ENCODE measurements at regions of chr6 and their contacts with region 1.

Region 1: DNA sequence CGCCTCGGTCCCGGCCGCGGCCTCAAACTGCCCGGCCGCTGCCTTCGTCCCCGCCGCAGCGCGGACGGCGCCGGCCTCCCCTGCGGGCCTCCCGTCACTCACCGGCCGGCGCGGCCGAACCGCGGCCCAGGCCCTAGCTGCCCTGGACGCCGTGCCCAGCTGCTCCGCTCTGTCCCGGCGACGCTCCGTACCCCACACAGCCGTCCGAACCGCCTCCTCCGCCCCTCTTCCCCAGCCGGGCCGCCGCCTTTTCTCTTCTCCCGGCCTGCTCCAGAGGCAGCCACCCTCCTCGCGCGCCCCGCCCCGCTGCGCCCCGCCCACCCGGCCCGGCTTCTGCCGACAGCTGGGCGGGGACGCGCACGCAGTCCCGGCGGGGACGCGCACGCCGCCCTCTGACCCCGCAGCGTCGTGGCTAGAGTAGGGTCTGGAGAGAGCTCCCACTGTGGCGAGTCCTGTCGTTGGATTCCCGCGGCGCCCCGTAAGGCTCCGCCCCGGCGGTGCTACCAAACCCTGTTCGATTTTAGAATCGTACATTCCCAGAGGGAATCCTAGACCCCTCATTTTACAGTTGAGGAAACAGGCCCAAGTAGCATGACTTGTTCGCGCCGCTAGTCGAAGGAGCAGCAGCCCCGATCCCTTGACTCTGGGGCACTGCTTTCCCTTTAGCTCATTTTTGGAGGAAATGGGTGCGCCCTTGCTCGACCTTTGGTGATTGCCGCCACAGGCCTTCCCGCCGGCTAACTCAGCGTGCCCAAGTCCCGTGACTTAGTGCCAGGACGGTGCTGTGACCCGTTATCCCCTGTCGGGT is at the start of gene FBXO30:
- DNase-seq: peak; percentile 89 to 97 (median 96)
- ATAC-seq: peak; percentile 98
- H3K4me3 ChIP-seq: peak within 1 kb of the TSS; percentile 64 to 65
- H3K27ac ChIP-seq: peak within 1 kb of the TSS; percentile 96 to 97
- H3K4me1 ChIP-seq: peaks cover 20 to 52% of the 10 kb centered on the region in 2 donors
- H3K27me3 ChIP-seq: no peaks in the 10 kb centered on the region
- CTCF ChIP-seq: peak in 1 of 2 donors; percentile 30
- polyA plus RNA-seq, gene FBXO30: 10.4 to 11.3 (median 10.9) TPM

Region 2: DNA sequence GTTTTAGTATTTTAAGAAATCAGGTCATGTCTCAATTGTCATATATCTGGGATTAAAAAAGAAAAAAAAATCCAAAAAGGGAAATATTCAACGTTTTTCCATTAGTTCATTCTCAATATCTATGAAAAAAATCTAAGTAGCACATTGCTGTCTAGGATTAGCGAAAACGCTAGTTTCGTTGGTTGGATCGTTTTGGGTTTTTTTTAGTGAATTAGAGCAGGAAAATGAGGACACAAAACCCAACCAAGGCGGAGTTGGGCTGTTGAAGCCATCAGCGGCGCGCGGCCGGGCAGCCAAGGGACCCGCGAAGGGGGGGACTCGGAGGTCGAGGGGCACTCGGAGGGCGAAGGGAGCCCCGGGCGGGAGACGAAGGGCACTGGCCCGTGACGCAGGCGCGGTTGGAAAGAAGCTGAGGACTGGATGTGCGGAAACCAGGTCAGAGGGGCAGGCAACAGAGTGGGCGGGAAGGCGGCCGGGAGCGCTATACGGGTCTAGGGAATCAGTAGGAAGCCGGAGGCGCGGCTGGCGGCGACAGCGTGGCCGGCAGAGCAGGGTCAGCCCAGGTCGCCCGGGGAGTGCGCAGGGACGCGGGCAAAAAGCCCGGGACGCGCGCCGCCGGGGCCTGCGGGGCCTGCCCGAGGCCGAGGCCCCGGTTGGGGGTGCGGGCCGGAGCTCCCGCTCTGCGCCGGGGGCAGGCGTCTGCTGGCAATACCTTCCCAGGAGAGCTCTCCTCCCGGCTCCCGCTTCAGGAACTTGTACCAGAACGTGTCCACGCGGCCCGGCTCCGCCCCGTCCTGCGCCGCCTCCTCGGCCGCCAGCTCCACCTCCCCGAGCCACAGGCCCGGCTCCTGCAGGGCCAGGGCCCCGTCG is 80.0 kb before region 1 on chr6:
- intact Hi-C with region 1: loop called in 1 of 2 experiments (anchors 10 kb)
- DNase-seq: peak; percentile 81 to 97 (median 90)
- ATAC-seq: peak; percentile 89
- H3K4me3 ChIP-seq: peak overlapping the region; percentile 60 to 72
- H3K27ac ChIP-seq: peak overlapping the region; percentile 93 to 99
- H3K4me1 ChIP-seq: peaks cover 0 to 33% of the 10 kb centered on the region in 2 donors
- H3K27me3 ChIP-seq: no peaks in the 10 kb centered on the region
- CTCF ChIP-seq: no peak

Measured in left lung (tissue), 14 donors.